ENCODE measurements at regions of chr17 and their contacts with region 1.

Region 1: DNA sequence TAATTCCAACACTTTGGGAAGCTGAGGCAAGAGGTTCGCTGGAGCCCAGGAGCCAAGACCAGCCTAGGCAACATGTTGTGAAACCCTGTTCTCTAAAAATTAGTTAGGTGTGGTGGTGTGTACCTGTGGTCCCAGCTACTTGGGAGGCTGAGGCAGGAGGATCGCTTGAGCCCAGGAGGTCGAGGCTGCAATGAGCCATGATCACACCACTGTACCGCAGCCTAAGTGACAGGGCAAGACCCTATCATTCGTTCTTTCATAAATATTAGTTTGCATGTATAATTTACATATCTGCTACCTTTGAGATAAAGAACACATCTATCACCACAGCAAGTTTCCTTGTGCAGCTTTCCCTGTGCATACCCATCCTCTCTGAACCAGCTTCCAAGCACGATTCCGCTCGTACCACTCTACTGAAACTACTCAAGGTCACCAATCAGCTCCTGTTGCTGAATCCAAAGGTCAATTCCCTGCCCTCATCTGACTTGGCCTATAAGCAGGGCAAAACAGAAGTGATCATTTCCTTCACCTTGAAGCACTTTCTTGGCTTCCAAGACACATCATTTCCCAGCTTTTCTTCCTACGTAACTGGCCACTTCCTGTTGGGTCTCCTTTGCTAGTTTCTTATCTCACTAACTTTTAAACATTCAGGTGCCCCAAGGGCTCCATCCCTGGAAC is 49.1 kb downstream of the GRB2 start:
- DNase-seq: no peak
- H3K4me3 ChIP-seq: no peak overlapping the region
- H3K27ac ChIP-seq: no peak overlapping the region
- H3K4me1 ChIP-seq: peaks cover 19% of the 10 kb centered on the region
- H3K27me3 ChIP-seq: no peaks in the 10 kb centered on the region
- CTCF ChIP-seq: no peak

Region 2: DNA sequence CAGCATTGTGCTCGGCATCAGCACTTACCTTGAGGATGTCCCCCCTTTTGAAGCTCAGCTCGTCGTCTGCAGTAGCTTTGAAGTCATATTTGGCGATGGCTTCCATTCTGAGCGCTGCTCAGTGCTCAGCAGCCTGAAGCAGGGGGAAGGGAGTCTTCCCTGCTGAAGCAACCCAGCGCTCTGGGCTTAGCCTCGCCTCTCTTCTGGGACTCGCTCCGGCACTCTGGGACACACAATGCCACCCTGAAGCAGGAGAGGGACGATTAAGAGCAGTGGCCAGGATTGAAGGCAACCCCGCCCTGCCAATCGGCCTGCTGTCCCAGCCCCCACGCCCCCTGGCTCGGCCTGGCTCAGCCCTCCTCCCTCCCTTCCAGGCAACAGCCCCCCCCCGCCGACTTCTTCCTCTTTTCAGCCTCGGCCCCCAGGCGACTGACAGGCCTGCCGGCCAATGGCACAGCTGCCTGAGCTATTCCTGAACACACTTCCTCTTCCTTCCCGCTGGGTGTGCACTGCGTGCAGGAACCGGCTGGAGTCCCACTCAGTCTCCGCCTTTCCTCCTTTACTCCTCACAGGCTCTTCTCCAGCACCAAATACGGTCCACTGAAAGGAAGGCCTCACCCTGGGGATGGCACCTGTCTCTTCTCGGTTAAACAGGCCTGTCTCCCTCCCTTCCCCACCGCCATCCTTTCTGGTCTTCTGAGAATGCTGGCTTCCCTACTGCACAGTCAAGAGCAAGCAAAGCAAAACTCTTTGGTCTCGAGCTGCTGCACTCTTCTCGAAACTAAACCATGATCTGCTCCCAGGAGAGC is 37.3 kb after region 1 on chr17:
- CTCF ChIA-PET with region 1: interaction called, 10 read pairs
- POLR2A ChIA-PET with region 1: no interaction called
- intact Hi-C with region 1: no loop called
- DNase-seq: peak; percentile 99
- H3K4me3 ChIP-seq: peak overlapping the region; percentile 52
- H3K27ac ChIP-seq: peak overlapping the region; percentile 58
- H3K4me1 ChIP-seq: peaks cover 17% of the 10 kb centered on the region
- H3K27me3 ChIP-seq: no peaks in the 10 kb centered on the region
- CTCF ChIP-seq: no peak

Region 3: DNA sequence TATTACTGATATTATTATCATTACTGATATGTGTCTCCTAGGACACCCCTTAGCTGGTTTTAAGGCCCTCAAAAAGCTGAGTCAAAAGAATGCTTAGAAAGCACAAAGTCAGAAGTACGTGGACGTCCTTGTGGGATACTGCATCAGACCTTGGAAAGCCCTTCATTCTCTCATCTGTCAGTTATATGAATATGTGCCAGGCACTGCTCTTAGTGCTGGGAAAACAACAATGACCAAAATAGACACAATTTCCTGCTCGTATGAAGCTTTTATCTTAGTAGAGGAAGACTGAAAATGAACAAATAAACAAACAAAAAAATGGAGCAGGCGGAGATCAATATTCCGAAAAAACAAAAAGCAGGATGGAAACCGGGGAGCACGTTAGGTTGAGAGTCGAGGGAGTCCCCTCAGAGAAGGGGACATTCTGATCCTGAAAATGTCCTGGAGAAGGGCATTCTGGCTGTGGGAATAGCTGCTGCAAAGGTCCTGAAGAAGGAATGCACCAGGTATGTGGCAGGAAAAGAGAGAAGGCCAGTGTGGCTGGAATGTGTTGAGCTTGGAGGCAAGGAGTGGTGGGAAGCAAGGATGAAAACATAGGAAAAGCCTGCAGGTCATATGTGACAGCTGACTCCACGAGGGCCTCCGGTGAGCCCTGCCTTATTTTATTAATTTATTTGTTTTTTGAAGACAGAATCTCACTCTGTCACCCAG is 84.5 kb after region 1 on chr17:
- CTCF ChIA-PET with region 1: no interaction called
- POLR2A ChIA-PET with region 1: no interaction called
- intact Hi-C with region 1: no loop called
- DNase-seq: no peak
- H3K4me3 ChIP-seq: no peak overlapping the region
- H3K27ac ChIP-seq: no peak overlapping the region
- H3K4me1 ChIP-seq: no peaks in the 10 kb centered on the region
- H3K27me3 ChIP-seq: no peaks in the 10 kb centered on the region
- CTCF ChIP-seq: no peak